CD4-positive, alpha-beta memory T cell (primary cell): ENCODE measurements at regions of chr12 and their contacts with region 1.

Region 1: DNA sequence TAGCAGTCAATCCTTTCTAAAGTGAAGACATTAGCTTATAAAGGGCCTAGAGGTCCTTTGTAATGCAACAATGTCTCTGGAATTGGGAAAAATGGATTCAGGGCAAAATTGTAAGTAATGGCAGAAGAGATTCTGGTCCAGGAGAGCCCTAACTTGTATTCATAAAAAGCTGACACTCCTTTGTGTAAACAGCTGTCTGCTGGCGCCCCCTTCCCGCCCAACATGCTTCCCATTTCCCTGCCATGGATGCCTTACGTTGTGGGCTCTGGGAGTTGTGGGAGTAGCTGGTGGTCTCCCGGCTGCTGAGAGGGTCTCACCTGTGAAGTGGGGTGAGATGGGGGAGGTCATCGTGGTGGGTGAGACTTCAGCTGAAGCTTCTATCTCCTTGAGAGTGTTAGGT is 2.3 kb downstream of the ACRBP start:
- DNase-seq: no peak
- H3K4me3 ChIP-seq: no peak overlapping the region
- H3K4me3 Mint-ChIP-seq: peak overlapping the region in 1 of 8 donors; percentile 42
- H3K27ac ChIP-seq: no peak overlapping the region
- H3K27ac Mint-ChIP-seq: peak overlapping the region in 1 of 7 donors; percentile 44
- H3K4me1 ChIP-seq: peaks cover 9% of the 10 kb centered on the region
- H3K4me1 Mint-ChIP-seq: peaks cover 5 to 16% (median 7%) of the 10 kb centered on the region in 4 donors
- H3K27me3 ChIP-seq: no peaks in the 10 kb centered on the region
- H3K27me3 Mint-ChIP-seq: peaks cover 0 to 5% of the 10 kb centered on the region in 2 donors

Region 2: DNA sequence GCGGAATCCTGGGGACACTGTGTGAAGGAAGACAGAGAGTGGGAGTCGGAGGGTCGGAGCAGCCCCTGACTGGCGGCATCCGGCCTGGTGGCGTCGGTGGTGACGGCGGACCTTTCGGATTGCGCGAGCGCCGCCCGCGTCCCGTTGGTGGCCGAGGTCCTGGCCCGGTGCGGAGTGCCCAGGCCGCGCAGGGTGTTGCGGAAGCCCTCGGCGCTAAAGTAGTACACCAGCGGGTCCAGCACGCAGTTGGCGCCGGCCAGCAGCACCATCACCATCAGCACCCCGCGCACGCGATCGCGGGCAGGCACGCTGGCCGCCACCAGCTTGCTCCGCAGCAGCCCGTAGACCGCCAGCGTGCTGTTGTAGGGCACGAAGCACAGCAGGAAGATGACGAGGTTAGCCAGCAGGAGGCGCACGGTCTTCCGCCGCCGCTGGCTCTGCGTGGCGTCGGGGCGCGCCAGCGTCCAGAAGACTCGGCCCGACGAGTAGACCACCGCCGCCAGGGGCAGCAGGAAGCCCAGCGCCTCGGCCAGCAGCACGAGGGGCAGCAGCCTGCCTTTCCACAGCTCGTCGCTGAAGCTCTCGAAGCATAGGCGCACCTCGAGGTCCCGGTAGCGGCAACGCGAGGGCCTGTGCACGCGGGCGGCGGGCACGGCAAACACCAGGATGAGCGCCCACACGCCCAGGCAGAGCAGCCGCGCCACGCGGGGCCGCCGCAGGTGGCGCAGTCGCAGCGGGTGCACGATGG is 24.6 kb before region 1 on chr12:
- CTCF ChIA-PET with region 1: interaction called, 30 read pairs
- POLR2A ChIA-PET with region 1: interaction called, 4 read pairs
- intact Hi-C with region 1: loop called (anchors 2 kb)
- DNase-seq: peak in 2 of 5 donors; percentile 36 to 49
- H3K4me3 ChIP-seq: peak overlapping the region in 1 of 2 donors; percentile 28
- H3K4me3 Mint-ChIP-seq: peak overlapping the region in 3 of 8 donors; percentile 54 to 78 (median 59)
- H3K27ac ChIP-seq: no peak overlapping the region
- H3K27ac Mint-ChIP-seq: peak overlapping the region in 1 of 7 donors; percentile 36
- H3K4me1 ChIP-seq: no peaks in the 10 kb centered on the region
- H3K4me1 Mint-ChIP-seq: peaks cover 3 to 24% (median 7%) of the 10 kb centered on the region in 4 donors
- H3K27me3 ChIP-seq: no peaks in the 10 kb centered on the region
- H3K27me3 Mint-ChIP-seq: no peaks in the 10 kb centered on the region

Region 3: DNA sequence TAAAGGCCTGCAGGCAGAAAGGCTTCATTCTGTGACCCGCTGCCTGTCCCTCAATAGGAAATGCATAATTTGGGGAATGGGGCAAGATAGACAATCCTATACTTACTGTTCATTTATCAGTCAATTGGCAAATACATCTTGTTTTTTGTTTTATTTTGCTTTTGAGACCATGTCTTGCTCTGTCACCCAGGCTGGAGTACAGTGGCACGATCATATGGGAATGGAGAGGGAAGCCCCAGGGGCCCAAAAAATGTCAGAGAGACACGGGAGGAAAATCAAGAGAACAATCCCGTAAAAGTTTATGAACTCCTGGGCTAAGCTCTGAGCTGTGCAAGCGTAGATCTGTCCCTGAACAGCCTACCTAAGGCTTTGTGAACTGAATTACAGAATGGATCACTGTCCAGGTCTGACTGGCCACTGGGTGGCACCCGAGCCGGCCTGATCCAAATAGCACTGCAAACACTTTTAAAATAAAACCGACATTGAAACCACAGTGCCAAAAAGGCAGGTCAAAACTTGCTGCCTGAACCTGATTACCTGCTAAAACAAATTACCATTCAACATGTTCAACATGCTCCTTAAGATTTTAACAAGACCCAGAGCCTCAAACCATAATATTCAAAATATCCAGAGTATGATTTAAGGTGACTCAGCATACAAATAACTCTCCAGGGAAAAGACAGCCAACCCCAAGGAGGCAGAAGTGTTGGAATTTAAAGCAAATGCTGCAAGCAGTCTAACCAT is 90.7 kb after region 1 on chr12:
- CTCF ChIA-PET with region 1: no interaction called
- POLR2A ChIA-PET with region 1: no interaction called
- intact Hi-C with region 1: no loop called
- DNase-seq: peak in 4 of 5 donors; percentile 19 to 32 (median 26)
- H3K4me3 ChIP-seq: no peak overlapping the region
- H3K4me3 Mint-ChIP-seq: no peak overlapping the region
- H3K27ac ChIP-seq: no peak overlapping the region
- H3K27ac Mint-ChIP-seq: peak overlapping the region in 1 of 7 donors; percentile 16
- H3K4me1 ChIP-seq: no peaks in the 10 kb centered on the region
- H3K4me1 Mint-ChIP-seq: no peaks in the 10 kb centered on the region
- H3K27me3 ChIP-seq: no peaks in the 10 kb centered on the region
- H3K27me3 Mint-ChIP-seq: no peaks in the 10 kb centered on the region